Activated naive CD8-positive, alpha-beta T cell treated with anti-CD3 and anti-CD28 coated beads, Interleukin-2, amount 10 ng/mL, durations not matched to agents 7 days and 5 days (primary cell): ENCODE measurements at regions of chr1 and their contacts with region 1.

Region 1: GRCh38 chr1:145858894-145859490 is at the start of gene PIAS3:
- DNase-seq: peak; percentile 91
- ATAC-seq: peak; percentile 81
- H3K4me3 Mint-ChIP-seq: peak within 1 kb of the TSS; percentile 97
- H3K27ac Mint-ChIP-seq: peak within 1 kb of the TSS; percentile 81
- H3K4me1 Mint-ChIP-seq: peaks cover 9% of the 10 kb centered on the region
- H3K27me3 Mint-ChIP-seq: peaks cover 5% of the 10 kb centered on the region
- total RNA-seq, gene PIAS3: 31.8 to 33.3 TPM

Region 2: DNA sequence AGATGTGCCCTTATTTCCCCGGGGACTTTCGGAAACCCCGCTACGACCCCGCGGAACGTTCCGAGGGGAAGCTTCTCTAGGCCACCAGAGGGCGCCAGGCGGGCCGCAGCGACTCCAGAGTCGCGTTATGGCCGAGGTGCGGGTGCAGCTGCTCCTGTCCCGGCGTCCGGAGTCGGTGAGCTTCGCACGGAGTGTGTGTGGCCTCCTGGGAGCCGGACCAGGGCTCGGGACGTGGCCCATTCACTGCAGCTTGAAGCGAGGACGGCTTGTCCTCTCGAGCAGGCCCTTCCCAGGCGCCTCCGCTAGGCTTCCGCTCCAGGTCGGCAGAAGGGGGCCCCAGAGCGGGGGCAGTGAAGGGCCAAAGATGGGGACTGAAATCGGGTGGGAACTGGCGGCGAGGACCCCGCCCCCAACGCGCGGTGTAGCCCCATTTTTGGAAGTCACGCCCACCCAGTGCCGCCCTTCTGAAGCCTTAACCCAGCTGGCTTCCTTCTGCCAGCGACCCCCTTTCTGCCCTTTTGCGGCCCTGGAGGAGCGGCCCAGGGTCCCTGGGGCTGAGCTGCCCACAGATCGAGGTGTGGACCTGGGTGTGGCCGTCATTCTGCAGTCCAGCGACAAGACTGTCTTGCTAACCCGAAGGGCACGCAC is 13.4 kb before region 1 on chr1 and contains the start of gene NUDT17:
- POLR2A ChIA-PET with region 1: interaction called, 41 read pairs
- DNase-seq: peak; percentile 85
- ATAC-seq: peak; percentile 77
- H3K4me3 Mint-ChIP-seq: no peak within 1 kb of the TSS
- H3K27ac Mint-ChIP-seq: no peak within 1 kb of the TSS
- H3K4me1 Mint-ChIP-seq: peaks cover 6% of the 10 kb centered on the region
- H3K27me3 Mint-ChIP-seq: no peaks in the 10 kb centered on the region
- total RNA-seq, gene NUDT17: 2.9 to 3.5 TPM

Region 3: GRCh38 chr1:145885738-145886287 is 26.8 kb after region 1 on chr1 and contains the start of gene ANKRD35:
- POLR2A ChIA-PET with region 1: interaction called, 12 read pairs
- DNase-seq: peak; percentile 91
- ATAC-seq: peak; percentile 100
- H3K4me3 Mint-ChIP-seq: peak within 1 kb of the TSS; percentile 83
- H3K27ac Mint-ChIP-seq: no peak within 1 kb of the TSS
- H3K4me1 Mint-ChIP-seq: peaks cover 13% of the 10 kb centered on the region
- H3K27me3 Mint-ChIP-seq: peaks cover 26% of the 10 kb centered on the region
- total RNA-seq, gene ANKRD35: 0.40 to 0.69 TPM

Region 4: DNA sequence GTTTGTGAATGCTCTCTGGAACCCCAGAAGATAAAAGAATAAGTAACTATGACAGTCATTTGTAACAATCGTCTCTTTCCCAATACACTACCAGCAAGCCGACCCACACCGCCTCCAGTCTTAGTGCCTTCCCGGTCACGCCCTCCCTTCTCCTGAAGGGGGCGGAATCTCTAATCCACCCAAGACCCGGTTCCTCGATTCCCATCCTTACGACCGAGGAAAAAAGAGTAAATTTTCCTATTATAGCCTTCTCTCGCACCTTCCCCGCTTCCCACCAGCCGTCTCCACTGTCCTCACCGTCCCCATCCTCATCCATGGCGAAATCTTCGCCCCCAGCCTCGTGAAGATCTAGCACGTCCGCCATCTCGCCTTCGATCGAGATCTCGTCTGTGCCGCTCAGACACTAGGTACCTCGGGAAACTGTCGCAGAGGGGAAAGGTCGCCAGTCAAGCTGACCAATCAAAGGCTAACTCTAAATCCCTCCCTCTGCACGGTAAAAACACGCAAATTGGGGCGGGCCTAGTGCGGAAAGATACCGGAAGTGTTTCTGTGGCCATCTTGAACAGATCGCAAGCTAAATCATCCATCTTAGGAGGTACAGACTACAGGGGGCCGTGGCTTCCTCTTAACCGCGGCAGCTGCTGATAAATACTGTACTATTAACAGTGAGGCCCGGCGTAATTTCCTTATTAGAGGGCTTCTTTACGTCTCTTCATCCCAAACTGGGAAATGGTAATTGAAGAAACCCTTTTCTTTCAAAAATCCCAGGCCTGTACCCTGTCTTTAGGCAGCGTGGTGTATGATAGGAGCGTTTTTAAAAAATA is 68.3 kb after region 1 on chr1 and contains the start of gene RBM8A:
- POLR2A ChIA-PET with region 1: interaction called, 19 read pairs
- DNase-seq: peak; percentile 83
- ATAC-seq: peak; percentile 96
- H3K4me3 Mint-ChIP-seq: no peak within 1 kb of the TSS
- H3K27ac Mint-ChIP-seq: peak within 1 kb of the TSS; percentile 93
- H3K4me1 Mint-ChIP-seq: peaks cover 17% of the 10 kb centered on the region
- H3K27me3 Mint-ChIP-seq: no peaks in the 10 kb centered on the region
- total RNA-seq, gene RBM8A: 157 to 160 TPM

Region 5: DNA sequence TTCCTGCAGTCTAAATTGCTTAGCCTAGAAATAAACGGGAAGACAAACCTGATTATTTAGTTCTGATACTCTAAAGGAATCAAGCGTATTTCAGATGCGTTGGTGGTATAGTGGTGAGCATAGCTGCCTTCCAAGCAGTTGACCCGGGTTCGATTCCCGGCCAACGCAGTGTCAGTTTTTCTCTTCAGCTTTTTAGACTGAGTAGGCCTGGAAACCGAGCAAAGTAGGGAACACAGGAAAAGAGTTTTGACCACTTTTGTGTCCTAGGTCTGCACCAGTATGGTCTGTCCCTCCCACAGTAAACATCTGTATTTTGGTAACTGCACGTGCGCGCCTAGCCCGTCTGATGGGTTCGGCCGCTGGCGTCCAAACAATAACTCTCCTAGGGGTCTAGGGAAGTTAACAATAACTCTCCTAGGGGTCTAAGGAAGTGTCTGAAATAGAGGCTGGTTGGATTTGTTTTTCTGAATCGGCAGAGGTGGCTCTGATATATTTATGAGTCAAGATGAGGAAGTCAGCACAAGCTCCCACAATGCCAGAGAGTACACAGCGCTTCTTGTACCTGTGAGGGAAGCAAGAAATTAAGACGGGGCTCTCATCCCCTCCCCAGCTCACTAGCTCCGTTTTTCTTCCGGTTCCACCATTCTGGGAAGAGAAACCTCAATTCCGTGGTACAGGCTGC is 178.1 kb after region 1 on chr1:
- POLR2A ChIA-PET with region 1: interaction called, 17 read pairs
- DNase-seq: peak; percentile 79
- ATAC-seq: peak; percentile 45
- H3K4me3 Mint-ChIP-seq: peak overlapping the region; percentile 90
- H3K27ac Mint-ChIP-seq: peak overlapping the region; percentile 94
- H3K4me1 Mint-ChIP-seq: peaks cover 33% of the 10 kb centered on the region
- H3K27me3 Mint-ChIP-seq: peaks cover 11% of the 10 kb centered on the region